ENCODE measurements at regions of chr2 and their contacts with region 1.

Region 1: DNA sequence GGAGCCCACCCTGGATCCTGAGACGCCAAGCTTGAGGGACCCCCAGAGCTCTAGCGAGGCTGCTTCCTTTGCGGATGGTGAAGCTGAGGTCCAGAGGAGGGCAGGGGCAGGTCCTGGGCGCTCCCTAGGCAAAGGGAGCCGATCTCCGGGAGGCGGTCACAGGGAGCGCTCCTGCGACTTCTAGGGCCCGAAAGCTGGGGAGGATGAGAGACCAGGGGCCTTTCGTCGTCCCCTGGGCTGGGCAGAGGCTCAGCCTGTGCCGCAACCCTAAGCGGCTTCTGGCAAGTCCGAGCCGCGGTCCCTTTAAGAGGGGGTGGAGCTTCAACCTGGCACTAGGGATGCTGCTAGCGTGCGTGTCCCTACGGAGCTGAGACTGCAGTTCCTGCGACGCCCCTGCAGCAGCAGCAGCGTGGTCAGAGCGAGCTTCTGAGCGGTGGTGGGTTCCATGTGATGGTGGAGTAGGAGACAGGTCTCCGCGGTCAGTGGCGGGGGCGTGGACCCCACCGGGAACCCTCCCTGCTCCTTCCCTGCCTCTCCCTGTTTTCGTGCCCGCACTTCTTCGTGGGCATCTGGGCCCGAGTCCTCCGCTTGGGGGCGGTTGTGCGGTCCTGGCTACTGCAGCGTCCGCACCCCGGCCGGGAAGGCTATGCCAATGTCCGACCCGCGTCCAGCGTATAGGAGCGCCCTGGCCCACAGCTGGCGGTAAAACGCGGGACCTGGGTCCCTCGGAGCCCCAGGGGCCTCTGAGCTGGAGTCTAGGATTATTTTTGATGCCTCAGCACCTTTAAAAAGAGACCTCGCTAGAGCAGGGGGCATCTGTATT is 154.6 kb downstream of the CCDC74A start:
- DNase-seq: peak; percentile 78 to 86
- H3K4me3 ChIP-seq: peak overlapping the region; percentile 53
- H3K4me3 Mint-ChIP-seq: peak overlapping the region; percentile 80
- H3K27ac Mint-ChIP-seq: peak overlapping the region; percentile 42
- H3K4me1 ChIP-seq: no peaks in the 10 kb centered on the region
- H3K4me1 Mint-ChIP-seq: no peaks in the 10 kb centered on the region
- H3K27me3 ChIP-seq: no peaks in the 10 kb centered on the region
- H3K27me3 Mint-ChIP-seq: no peaks in the 10 kb centered on the region
- CTCF ChIP-seq: peak in 1 of 2 experiments; percentile 15

Region 2: GRCh38 chr2:131389657-131390056 is 292.7 kb before region 1 on chr2:
- CTCF ChIA-PET with region 1: no interaction called
- POLR2A ChIA-PET with region 1: no interaction called
- intact Hi-C with region 1: no loop called
- DNase-seq: no peak
- H3K4me3 ChIP-seq: no peak overlapping the region
- H3K4me3 Mint-ChIP-seq: no peak overlapping the region
- H3K27ac Mint-ChIP-seq: no peak overlapping the region
- H3K4me1 ChIP-seq: no peaks in the 10 kb centered on the region
- H3K4me1 Mint-ChIP-seq: no peaks in the 10 kb centered on the region
- H3K27me3 ChIP-seq: no peaks in the 10 kb centered on the region; the same call in 1 of the 2 replicates
- H3K27me3 Mint-ChIP-seq: peaks cover 9% of the 10 kb centered on the region
- CTCF ChIP-seq: no peak

Region 3: DNA sequence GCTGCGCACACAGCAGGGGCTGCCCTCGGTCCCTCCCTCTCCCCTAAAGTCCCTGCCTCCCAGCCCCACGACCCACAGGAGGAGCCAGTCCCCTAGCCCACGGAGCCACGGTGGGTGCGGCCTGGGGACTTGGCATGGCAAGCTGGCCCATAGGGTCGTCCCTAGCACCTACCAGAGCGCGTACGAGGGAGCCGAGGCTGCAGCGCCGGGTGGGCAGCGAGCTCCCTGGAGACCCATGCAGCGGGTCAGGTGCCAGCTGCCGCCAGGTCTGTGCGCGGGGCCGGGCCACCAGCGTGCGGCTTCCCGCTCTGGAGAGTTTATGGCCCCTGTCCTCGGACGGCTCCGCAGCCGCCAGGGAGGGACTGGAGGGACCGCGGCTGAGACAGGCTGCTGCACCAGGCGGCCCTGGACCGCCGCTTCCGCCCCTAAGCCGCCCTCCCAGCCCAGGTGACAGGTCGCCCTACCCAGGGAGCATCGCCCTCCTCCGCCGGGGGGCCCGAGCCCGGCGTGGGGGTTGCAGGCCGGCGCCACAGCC is 118.9 kb after region 1 on chr2:
- CTCF ChIA-PET with region 1: interaction called, 6 read pairs
- POLR2A ChIA-PET with region 1: no interaction called
- intact Hi-C with region 1: loop called (anchors 2 kb)
- DNase-seq: peak in 1 of 2 experiments; percentile 9
- H3K4me3 ChIP-seq: no peak overlapping the region
- H3K4me3 Mint-ChIP-seq: no peak overlapping the region
- H3K27ac Mint-ChIP-seq: no peak overlapping the region
- H3K4me1 ChIP-seq: no peaks in the 10 kb centered on the region
- H3K4me1 Mint-ChIP-seq: no peaks in the 10 kb centered on the region
- H3K27me3 ChIP-seq: no peaks in the 10 kb centered on the region
- H3K27me3 Mint-ChIP-seq: peaks cover 3% of the 10 kb centered on the region
- CTCF ChIP-seq: no peak

Measured in Caco-2 (cell line).